ENCODE measurements at regions of chr22 and their contacts with region 1.

Region 1: DNA sequence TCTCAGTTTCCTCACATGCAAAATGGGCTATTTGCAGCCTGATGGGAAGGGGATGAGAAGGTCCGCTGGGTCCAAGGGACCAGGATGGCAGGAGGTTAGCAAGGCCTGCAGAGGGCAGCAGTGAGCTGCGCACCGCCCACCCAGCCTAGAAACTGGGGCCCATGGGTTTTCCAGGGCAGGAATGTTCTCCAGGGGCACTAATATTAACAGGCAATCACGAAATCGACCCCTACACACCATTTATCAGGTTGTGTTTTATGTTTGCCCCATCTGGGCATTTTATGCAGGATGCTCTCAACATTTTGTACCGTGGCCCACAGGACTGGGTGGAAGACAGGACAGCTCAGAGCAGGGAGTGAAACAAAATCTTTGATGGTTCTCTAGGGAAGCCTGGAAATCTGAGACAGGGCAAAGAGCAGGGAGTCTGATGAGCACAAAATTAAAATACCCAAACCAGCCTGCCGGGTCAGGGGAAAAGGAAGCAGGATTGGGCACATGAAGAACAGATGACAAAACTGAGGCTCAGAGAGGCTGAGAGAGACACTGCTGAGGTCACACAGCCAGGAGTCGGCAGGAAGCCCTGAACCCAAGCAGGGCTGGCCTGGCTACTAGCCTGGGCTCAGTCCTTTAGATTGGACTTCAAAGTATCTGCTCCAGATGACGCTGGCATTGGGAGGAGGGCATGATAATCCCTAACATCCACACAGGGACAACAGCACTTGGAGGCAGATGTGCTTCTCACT is 1.6 kb upstream of the BCR start:
- DNase-seq: no peak
- ATAC-seq: peak; percentile 51
- H3K4me3 ChIP-seq: no peak overlapping the region
- H3K27ac ChIP-seq: no peak overlapping the region
- H3K4me1 ChIP-seq: peaks cover 59% of the 10 kb centered on the region
- H3K27me3 ChIP-seq: no peaks in the 10 kb centered on the region
- CTCF ChIP-seq: peak; percentile 95 to 98 (median 97); a peak in 5 of 6 replicates
- EP300 ChIP-seq: no peak
- POLR2A ChIP-seq: no peak
- RAD21 ChIP-seq: peak; percentile 92

Region 2: GRCh38 chr22:23137905-23138561 is 40.6 kb before region 1 on chr22:
- CTCF ChIA-PET with region 1: interaction called, 14 read pairs
- POLR2A ChIA-PET with region 1: interaction called, 3 read pairs
- RAD21 ChIA-PET with region 1: interaction called, 6 read pairs
- SMC1A ChIA-PET with region 1: interaction called, 7 read pairs
- in situ Hi-C with region 1: no loop called
- intact Hi-C with region 1: loop called (anchors 5 kb)
- DNase-seq: peak; percentile 86
- ATAC-seq: peak; percentile 72
- H3K4me3 ChIP-seq: 0 out of 2 replicates have a peak overlapping the region, but pooled peaks have one; percentile 7
- H3K27ac ChIP-seq: peak overlapping the region; percentile 86
- H3K4me1 ChIP-seq: peaks cover 60% of the 10 kb centered on the region
- H3K27me3 ChIP-seq: no peaks in the 10 kb centered on the region
- CTCF ChIP-seq: no peak
- EP300 ChIP-seq: peak in 1 of 2 experiments; percentile 65; a peak in 1 of 4 replicates
- POLR2A ChIP-seq: no peak
- RAD21 ChIP-seq: no peak

Region 3: GRCh38 chr22:23219822-23220484 is 41.3 kb after region 1 on chr22:
- CTCF ChIA-PET with region 1: interaction called, 6 read pairs
- POLR2A ChIA-PET with region 1: interaction called, 5 read pairs
- RAD21 ChIA-PET with region 1: interaction called, 6 read pairs
- SMC1A ChIA-PET with region 1: interaction called, 6 read pairs
- in situ Hi-C with region 1: no loop called
- intact Hi-C with region 1: loop called (anchors 5 kb)
- DNase-seq: peak; percentile 67
- ATAC-seq: peak; percentile 93
- H3K4me3 ChIP-seq: peak overlapping the region; percentile 24; the same call in 1 of the 2 replicates
- H3K27ac ChIP-seq: peak overlapping the region; percentile 72
- H3K4me1 ChIP-seq: peaks cover 44% of the 10 kb centered on the region
- H3K27me3 ChIP-seq: no peaks in the 10 kb centered on the region
- CTCF ChIP-seq: no peak
- EP300 ChIP-seq: no peak
- POLR2A ChIP-seq: no peak; the same call in 1 of the 2 replicates
- RAD21 ChIP-seq: no peak

Region 4: DNA sequence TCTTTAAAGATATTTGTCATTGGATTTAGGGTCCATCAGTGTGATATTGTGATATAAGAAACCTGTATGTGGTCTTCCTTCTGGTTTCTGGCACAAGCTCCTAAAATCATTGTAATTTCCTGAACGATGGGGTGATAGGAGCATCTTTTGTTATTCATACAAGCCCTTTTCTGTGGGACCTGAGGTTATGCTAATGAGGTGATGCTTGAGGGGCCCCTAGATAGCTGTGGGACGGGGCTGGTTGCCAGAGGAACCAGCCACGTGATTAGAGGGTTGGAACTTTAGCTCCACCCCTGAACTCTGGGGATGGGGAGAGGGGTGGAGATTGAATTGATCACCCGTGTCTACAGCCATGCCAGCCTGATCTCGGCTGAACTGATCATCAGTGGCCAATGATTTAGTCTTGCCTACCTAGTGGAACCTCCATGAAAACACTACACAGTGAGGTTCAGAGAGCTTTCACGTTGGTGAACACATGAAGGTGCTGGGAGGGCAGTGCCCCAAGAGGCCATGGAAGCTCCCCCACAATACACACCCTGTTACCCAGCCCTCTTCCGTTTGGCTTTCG is 64.4 kb after region 1 on chr22:
- CTCF ChIA-PET with region 1: interaction called, 15 read pairs
- POLR2A ChIA-PET with region 1: interaction called, 3 read pairs
- RAD21 ChIA-PET with region 1: interaction called, 5 read pairs
- SMC1A ChIA-PET with region 1: interaction called, 6 read pairs
- in situ Hi-C with region 1: no loop called
- intact Hi-C with region 1: no loop called
- DNase-seq: peak; percentile 41
- ATAC-seq: peak; percentile 92
- H3K4me3 ChIP-seq: 0 out of 2 replicates have a peak overlapping the region, but pooled peaks have one; percentile 23
- H3K27ac ChIP-seq: peak overlapping the region; percentile 28; the same call in 1 of the 2 replicates
- H3K4me1 ChIP-seq: peaks cover 35% of the 10 kb centered on the region
- H3K27me3 ChIP-seq: no peaks in the 10 kb centered on the region
- CTCF ChIP-seq: no peak
- EP300 ChIP-seq: no peak
- POLR2A ChIP-seq: no peak
- RAD21 ChIP-seq: no peak

Region 5: DNA sequence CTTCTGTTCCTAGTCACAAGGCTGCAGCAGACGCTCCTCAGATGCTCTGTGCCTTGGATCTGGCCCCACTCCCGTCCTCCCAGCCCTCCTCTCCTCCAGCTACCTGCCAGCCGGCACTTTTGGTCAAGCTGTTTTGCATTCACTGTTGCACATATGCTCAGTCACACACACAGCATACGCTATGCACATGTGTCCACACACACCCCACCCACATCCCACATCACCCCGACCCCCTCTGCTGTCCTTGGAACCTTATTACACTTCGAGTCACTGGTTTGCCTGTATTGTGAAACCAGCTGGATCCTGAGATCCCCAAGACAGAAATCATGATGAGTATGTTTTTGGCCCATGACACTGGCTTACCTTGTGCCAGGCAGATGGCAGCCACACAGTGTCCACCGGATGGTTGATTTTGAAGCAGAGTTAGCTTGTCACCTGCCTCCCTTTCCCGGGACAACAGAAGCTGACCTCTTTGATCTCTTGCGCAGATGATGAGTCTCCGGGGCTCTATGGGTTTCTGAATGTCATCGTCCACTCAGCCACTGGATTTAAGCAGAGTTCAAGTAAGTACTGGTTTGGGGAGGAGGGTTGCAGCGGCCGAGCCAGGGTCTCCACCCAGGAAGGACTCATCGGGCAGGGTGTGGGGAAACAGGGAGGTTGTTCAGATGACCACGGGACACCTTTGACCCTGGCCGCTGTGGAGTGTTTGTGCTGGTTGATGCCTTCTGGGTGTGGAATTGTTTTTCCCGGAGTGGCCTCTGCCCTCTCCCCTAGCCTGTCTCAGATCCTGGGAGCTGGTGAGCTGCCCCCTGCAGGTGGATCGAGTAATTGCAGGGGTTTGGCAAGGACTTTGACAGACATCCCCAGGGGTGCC is 111.4 kb after region 1 on chr22:
- CTCF ChIA-PET with region 1: interaction called, 95 read pairs
- POLR2A ChIA-PET with region 1: interaction called, 4 read pairs
- RAD21 ChIA-PET with region 1: interaction called, 167 read pairs
- SMC1A ChIA-PET with region 1: interaction called, 10 read pairs
- in situ Hi-C with region 1: no loop called
- intact Hi-C with region 1: no loop called
- DNase-seq: no peak
- ATAC-seq: peak; percentile 75
- H3K4me3 ChIP-seq: no peak overlapping the region
- H3K27ac ChIP-seq: no peak overlapping the region
- H3K4me1 ChIP-seq: peaks cover 9% of the 10 kb centered on the region
- H3K27me3 ChIP-seq: no peaks in the 10 kb centered on the region
- CTCF ChIP-seq: peak; percentile 55 to 85 (median 83)
- EP300 ChIP-seq: no peak
- POLR2A ChIP-seq: no peak
- RAD21 ChIP-seq: peak; percentile 38; the same call in 1 of the 2 replicates

Region 6: GRCh38 chr22:23385291-23386244 is 206.9 kb after region 1 on chr22:
- CTCF ChIA-PET with region 1: interaction called, 17 read pairs
- POLR2A ChIA-PET with region 1: no interaction called
- RAD21 ChIA-PET with region 1: interaction called, 15 read pairs
- SMC1A ChIA-PET with region 1: interaction called, 3 read pairs
- in situ Hi-C with region 1: loop called (anchors 5 kb)
- intact Hi-C with region 1: loop called (anchors 1 kb)
- DNase-seq: peak; percentile 36
- ATAC-seq: peak; percentile 97
- H3K4me3 ChIP-seq: no peak overlapping the region
- H3K27ac ChIP-seq: no peak overlapping the region
- H3K4me1 ChIP-seq: no peaks in the 10 kb centered on the region
- H3K27me3 ChIP-seq: no peaks in the 10 kb centered on the region
- CTCF ChIP-seq: peak; percentile 95 to 97 (median 97); a peak in 5 of 6 replicates
- EP300 ChIP-seq: no peak
- POLR2A ChIP-seq: no peak
- RAD21 ChIP-seq: peak; percentile 96